Activated CD4-positive, alpha-beta T cell treated with anti-CD3 and anti-CD28 coated beads, Interleukin-2, amount 10 ng/mL, durations not matched to agents 7 days and 5 days (primary cell): ENCODE measurements at regions of chr2 and their contacts with region 1.

Region 1: GRCh38 chr2:20326163-20326780 is 24.4 kb downstream of the PUM2 start:
- DNase-seq: peak; percentile 57
- H3K4me3 Mint-ChIP-seq: no peak overlapping the region
- H3K27ac Mint-ChIP-seq: peak overlapping the region; percentile 23
- H3K4me1 Mint-ChIP-seq: peaks cover 62% of the 10 kb centered on the region
- H3K27me3 Mint-ChIP-seq: no peaks in the 10 kb centered on the region

Region 2: DNA sequence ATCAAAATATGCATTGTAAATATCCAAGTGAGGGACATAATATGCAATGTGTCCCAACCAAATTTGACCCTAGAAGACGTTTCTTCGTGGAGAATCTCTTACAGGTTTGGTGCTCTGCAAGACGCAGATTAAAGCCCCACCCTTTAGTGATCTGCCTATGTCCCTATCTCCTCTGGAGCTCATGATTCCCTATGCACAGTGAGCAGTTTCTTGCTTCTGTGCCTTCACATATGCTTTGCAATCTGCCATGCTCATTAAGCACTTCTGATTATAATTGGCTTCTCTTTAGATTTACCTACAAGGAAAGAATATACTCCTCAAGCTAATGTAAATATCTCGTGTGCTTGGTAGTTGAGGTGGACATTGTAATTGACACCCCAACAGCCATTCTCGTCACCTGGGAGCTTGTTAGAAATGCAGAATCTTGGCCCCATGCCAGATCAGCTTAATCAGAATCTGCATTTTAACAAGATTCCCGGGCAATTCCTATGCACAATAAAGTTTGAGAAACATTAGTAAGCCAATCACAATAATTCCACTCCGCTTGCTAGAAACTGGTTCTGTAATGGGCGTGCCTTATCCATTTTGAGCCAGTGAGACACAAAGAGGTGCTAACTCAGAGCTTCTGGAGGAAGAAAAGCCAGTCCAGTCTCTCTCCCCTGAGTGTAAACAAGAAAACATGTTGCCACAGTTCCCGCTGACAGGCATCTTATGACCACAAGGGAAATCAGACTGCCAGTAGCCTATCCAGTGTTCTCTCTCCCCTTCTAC is 27.2 kb after region 1 on chr2:
- CTCF ChIA-PET with region 1: interaction called, 3 read pairs
- POLR2A ChIA-PET with region 1: interaction called, 10 read pairs
- DNase-seq: no peak
- H3K4me3 Mint-ChIP-seq: no peak overlapping the region
- H3K27ac Mint-ChIP-seq: no peak overlapping the region
- H3K4me1 Mint-ChIP-seq: peaks cover 16% of the 10 kb centered on the region
- H3K27me3 Mint-ChIP-seq: no peaks in the 10 kb centered on the region

Region 3: GRCh38 chr2:20411361-20411894 is 85.2 kb after region 1 on chr2:
- CTCF ChIA-PET with region 1: no interaction called
- POLR2A ChIA-PET with region 1: no interaction called
- DNase-seq: peak; percentile 77
- H3K4me3 Mint-ChIP-seq: no peak overlapping the region
- H3K27ac Mint-ChIP-seq: no peak overlapping the region
- H3K4me1 Mint-ChIP-seq: peaks cover 1% of the 10 kb centered on the region
- H3K27me3 Mint-ChIP-seq: peaks cover 36% of the 10 kb centered on the region